Astrocyte of the cerebellum (primary cell): ENCODE measurements at regions of chr11 and their contacts with region 1.

Region 1: GRCh38 chr11:35391922-35392813 is 27.2 kb downstream of the SLC1A2 start:
- DNase-seq: peak; percentile 53
- H3K4me3 ChIP-seq: no peak overlapping the region
- CTCF ChIP-seq: peak; percentile 80

Region 2: GRCh38 chr11:34585735-34586487 is 806.3 kb before region 1 on chr11:
- in situ Hi-C with region 1: loop called (anchors 25 kb)
- DNase-seq: peak; percentile 77
- H3K4me3 ChIP-seq: peak overlapping the region; percentile 2
- CTCF ChIP-seq: peak; percentile 43

Region 3: GRCh38 chr11:35305670-35306382 is 86.3 kb before region 1 on chr11:
- in situ Hi-C with region 1: no loop called
- DNase-seq: peak; percentile 32
- H3K4me3 ChIP-seq: no peak overlapping the region
- CTCF ChIP-seq: peak; percentile 71